PC-3 (cell line): ENCODE measurements at regions of chr2 and their contacts with region 1.

Region 1: GRCh38 chr2:142796161-142796560 is 81.3 kb upstream of the KYNU start:
- DNase-seq: no peak
- ATAC-seq: no peak
- H3K4me3 ChIP-seq: no peak overlapping the region
- H3K27ac ChIP-seq: no peak overlapping the region
- H3K4me1 ChIP-seq: no peaks in the 10 kb centered on the region
- H3K27me3 ChIP-seq: no peaks in the 10 kb centered on the region
- CTCF ChIP-seq: 0 out of 2 replicates have a peak, but pooled peaks have one; percentile 26

Region 2: DNA sequence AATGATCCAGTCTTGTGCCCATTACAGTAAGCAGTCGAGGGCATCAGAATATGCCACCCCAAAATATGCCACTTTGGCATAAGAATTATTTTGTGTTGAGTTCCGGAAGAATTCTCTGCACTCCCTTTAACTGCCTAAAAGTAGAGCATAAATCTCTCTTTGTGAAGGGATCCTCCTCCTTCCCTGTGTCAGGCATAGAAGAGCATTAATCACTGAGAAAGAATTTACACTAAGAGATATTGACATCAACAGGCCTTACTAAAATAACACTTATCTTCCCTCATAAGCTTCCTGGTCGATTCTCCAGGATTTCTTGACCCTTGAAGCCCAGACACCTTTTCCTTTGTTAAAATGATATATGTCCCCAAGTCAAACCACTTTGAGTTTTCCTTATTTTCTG is 53.7 kb after region 1 on chr2:
- CTCF ChIA-PET with region 1: interaction called, 10 read pairs
- POLR2A ChIA-PET with region 1: no interaction called
- intact Hi-C with region 1: no loop called
- DNase-seq: no peak
- ATAC-seq: no peak
- H3K4me3 ChIP-seq: no peak overlapping the region
- H3K27ac ChIP-seq: no peak overlapping the region
- H3K4me1 ChIP-seq: no peaks in the 10 kb centered on the region
- H3K27me3 ChIP-seq: no peaks in the 10 kb centered on the region
- CTCF ChIP-seq: no peak

Region 3: GRCh38 chr2:142980561-142981378 is 184.6 kb after region 1 on chr2:
- CTCF ChIA-PET with region 1: no interaction called
- POLR2A ChIA-PET with region 1: no interaction called
- intact Hi-C with region 1: loop called (anchors 1 kb)
- DNase-seq: peak; percentile 77
- ATAC-seq: peak; percentile 83
- H3K4me3 ChIP-seq: no peak overlapping the region
- H3K27ac ChIP-seq: peak overlapping the region; percentile 59
- H3K4me1 ChIP-seq: peaks cover 11% of the 10 kb centered on the region
- H3K27me3 ChIP-seq: no peaks in the 10 kb centered on the region
- CTCF ChIP-seq: peak; percentile 67